ENCODE measurements at regions of chr7 and their contacts with region 1.

Region 1: GRCh38 chr7:106176414-106177299 is 64.5 kb upstream of the SYPL1 start:
- DNase-seq: peak; percentile 90 to 92 (median 90)
- ATAC-seq: peak; percentile 95
- H3K4me3 ChIP-seq: no peak overlapping the region
- H3K27ac ChIP-seq: no peak overlapping the region
- H3K4me1 ChIP-seq: peaks cover 0 to 5% of the 10 kb centered on the region in 2 experiments; a peak in 3 of 5 replicates
- H3K27me3 ChIP-seq: no peaks in the 10 kb centered on the region
- CTCF ChIP-seq: peak; percentile 94 to 99 (median 99)
- EP300 ChIP-seq: no peak
- POLR2A ChIP-seq: no peak
- RAD21 ChIP-seq: peak; percentile 100

Region 2: DNA sequence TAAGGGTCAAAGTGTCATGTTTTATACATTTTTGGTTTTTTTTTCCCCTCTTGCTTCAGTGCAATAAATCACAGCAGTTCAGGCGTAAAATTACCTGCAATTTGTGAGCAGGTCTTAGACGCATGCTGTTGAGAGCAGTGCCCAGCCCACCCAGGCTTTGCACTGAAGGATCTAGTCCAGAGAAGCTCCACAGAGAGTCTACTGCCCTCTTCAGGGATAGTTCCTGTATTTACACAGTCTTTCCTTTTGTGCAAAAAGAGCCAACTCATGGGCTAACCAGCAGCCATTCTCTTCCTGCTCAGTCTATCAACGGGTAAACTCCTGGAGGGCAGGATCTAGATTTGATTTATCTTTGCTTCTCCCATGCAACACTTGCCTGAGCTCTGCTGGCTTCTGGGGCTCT is 190.4 kb after region 1 on chr7:
- CTCF ChIA-PET with region 1: no interaction called
- POLR2A ChIA-PET with region 1: interaction called, 3 read pairs
- in situ Hi-C with region 1: loop called (anchors 5 kb)
- intact Hi-C with region 1: loop called (anchors 1 kb)
- DNase-seq: peak in 3 of 4 experiments; percentile 33 to 77 (median 68)
- ATAC-seq: peak; percentile 96
- H3K4me3 ChIP-seq: no peak overlapping the region
- H3K27ac ChIP-seq: no peak overlapping the region
- H3K4me1 ChIP-seq: peaks cover 0 to 18% of the 10 kb centered on the region in 2 experiments; a peak in 4 of 5 replicates
- H3K27me3 ChIP-seq: no peaks in the 10 kb centered on the region
- CTCF ChIP-seq: peak; percentile 69 to 87 (median 74)
- EP300 ChIP-seq: no peak; the same call in 1 of the 2 replicates
- POLR2A ChIP-seq: no peak
- RAD21 ChIP-seq: peak; percentile 85 to 92

Region 3: GRCh38 chr7:106535234-106536026 is 358.8 kb after region 1 on chr7:
- CTCF ChIA-PET with region 1: no interaction called
- POLR2A ChIA-PET with region 1: no interaction called
- in situ Hi-C with region 1: loop called (anchors 10 kb)
- intact Hi-C with region 1: no loop called
- DNase-seq: no peak
- ATAC-seq: peak; percentile 20
- H3K4me3 ChIP-seq: no peak overlapping the region
- H3K27ac ChIP-seq: no peak overlapping the region
- H3K4me1 ChIP-seq: peaks cover 0 to 22% of the 10 kb centered on the region in 2 experiments; a peak in 4 of 5 replicates
- H3K27me3 ChIP-seq: no peaks in the 10 kb centered on the region
- CTCF ChIP-seq: no peak
- EP300 ChIP-seq: no peak
- POLR2A ChIP-seq: no peak
- RAD21 ChIP-seq: no peak

Region 4: DNA sequence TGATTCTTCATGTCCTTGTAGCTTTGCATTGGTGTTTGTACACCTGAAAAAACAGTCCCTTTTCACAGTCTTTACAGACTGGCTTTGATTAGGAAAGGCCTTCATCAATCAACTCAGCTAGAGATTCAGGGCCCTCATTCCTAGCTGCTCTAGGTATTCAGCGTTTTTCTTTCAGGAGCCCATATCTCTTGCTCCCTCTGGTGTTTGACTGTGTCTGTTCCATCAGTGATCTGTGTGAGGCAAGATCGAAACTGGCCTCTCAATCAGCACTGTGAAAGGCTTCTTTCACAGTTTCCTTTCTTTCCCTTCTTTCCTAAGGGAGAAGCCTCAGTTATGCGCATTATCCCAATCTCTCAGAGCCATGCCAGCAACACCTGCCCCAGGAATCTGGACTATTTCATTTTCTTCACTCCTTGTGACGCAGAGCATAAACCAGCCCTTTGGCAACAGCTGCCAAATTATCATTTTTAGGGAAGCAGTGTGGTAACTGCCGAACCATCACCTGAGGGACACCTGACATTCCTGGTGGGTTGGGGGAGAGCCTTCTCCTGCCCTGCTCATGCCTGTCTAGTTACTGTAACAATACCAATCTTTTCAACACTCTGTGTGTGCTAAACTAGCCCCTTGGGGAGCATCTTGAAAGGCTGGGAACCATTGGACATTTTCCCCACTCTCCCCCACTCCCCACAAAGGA is 560.0 kb after region 1 on chr7:
- CTCF ChIA-PET with region 1: interaction called, 26 read pairs
- POLR2A ChIA-PET with region 1: no interaction called
- in situ Hi-C with region 1: no loop called
- intact Hi-C with region 1: loop called (anchors 1 kb)
- DNase-seq: peak; percentile 43 to 80 (median 64)
- ATAC-seq: peak; percentile 94
- H3K4me3 ChIP-seq: no peak overlapping the region
- H3K27ac ChIP-seq: peak overlapping the region; percentile 18; the same call in 1 of the 3 replicates
- H3K4me1 ChIP-seq: peaks cover 0 to 16% of the 10 kb centered on the region in 2 experiments; a peak in 2 of 5 replicates
- H3K27me3 ChIP-seq: no peaks in the 10 kb centered on the region
- CTCF ChIP-seq: peak; percentile 83 to 92 (median 90)
- EP300 ChIP-seq: peak; percentile 57; the same call in 1 of the 2 replicates
- POLR2A ChIP-seq: no peak
- RAD21 ChIP-seq: peak; percentile 97 to 99

Measured in K562 (cell line).